Sciatic nerve (tissue), 2 donors: ENCODE measurements at regions of chr7 and their contacts with region 1.

Region 1: GRCh38 chr7:111150709-111151108 is 59.8 kb downstream of the LRRN3 start:
- DNase-seq: no peak
- ATAC-seq: no peak

Region 2: DNA sequence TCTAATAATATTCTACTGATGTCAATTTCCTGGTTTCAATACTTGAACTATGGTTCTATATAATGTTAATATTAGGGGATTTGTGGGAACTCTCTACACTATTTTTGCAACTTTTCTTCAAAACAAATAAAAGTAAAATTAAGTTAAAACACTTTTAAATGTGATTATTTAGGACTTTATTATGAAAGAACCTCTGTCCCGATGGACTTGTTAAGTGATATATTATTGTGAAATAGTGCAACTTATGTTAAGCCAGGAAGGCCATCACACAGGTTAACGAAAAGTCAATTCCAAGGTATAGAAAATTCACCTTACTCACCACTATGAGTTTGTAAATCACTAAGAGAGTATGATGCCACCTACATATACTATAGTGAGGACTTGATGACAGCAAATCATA is 332.4 kb after region 1 on chr7:
- intact Hi-C with region 1: loop called (anchors 5 kb)
- DNase-seq: no peak
- ATAC-seq: no peak